ENCODE measurements at regions of chr3 and their contacts with region 1.

Region 1: DNA sequence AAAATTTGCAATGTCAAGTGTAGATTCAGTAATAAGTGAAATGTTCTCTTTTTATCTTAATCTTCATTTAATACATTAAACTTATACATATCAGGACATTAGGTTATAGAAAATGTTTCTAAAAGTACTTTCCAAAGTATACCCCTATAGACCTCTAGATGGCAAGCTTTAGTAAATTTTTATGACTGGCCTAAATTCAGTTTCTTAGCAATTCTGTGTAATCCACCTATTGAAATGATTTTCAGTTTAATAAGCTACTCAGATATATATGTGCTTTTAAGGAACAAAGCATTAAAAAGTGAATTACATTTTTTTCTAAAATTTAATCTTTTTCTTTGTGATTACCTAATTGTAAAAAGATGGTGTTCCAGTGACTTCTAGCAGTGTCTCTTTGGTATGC is 342.2 kb downstream of the GBE1 start:
- DNase-seq: peak; percentile 43
- H3K4me3 ChIP-seq: no peak overlapping the region
- H3K27ac ChIP-seq: no peak overlapping the region
- H3K4me1 ChIP-seq: peaks cover under 1% of the 10 kb centered on the region
- H3K27me3 ChIP-seq: no peaks in the 10 kb centered on the region
- CTCF ChIP-seq: peak; percentile 21 to 32
- POLR2A ChIP-seq: no peak

Region 2: GRCh38 chr3:81352867-81353545 is 66.2 kb before region 1 on chr3:
- CTCF ChIA-PET with region 1: interaction called, 21 read pairs
- POLR2A ChIA-PET with region 1: no interaction called
- dilution Hi-C with region 1: no loop called
- intact Hi-C with region 1: no loop called
- DNase-seq: peak; percentile 85
- H3K4me3 ChIP-seq: no peak overlapping the region
- H3K27ac ChIP-seq: no peak overlapping the region
- H3K4me1 ChIP-seq: no peaks in the 10 kb centered on the region
- H3K27me3 ChIP-seq: no peaks in the 10 kb centered on the region
- CTCF ChIP-seq: peak; percentile 16 to 38
- POLR2A ChIP-seq: no peak

Region 3: GRCh38 chr3:81465510-81466200 is 46.4 kb after region 1 on chr3:
- CTCF ChIA-PET with region 1: interaction called, 16 read pairs
- POLR2A ChIA-PET with region 1: no interaction called
- dilution Hi-C with region 1: no loop called
- intact Hi-C with region 1: no loop called
- DNase-seq: peak; percentile 82
- H3K4me3 ChIP-seq: peak overlapping the region in 1 of 3 experiments; percentile 11
- H3K27ac ChIP-seq: peak overlapping the region; percentile 55
- H3K4me1 ChIP-seq: peaks cover 13% of the 10 kb centered on the region
- H3K27me3 ChIP-seq: no peaks in the 10 kb centered on the region
- CTCF ChIP-seq: no peak
- POLR2A ChIP-seq: no peak

Region 4: DNA sequence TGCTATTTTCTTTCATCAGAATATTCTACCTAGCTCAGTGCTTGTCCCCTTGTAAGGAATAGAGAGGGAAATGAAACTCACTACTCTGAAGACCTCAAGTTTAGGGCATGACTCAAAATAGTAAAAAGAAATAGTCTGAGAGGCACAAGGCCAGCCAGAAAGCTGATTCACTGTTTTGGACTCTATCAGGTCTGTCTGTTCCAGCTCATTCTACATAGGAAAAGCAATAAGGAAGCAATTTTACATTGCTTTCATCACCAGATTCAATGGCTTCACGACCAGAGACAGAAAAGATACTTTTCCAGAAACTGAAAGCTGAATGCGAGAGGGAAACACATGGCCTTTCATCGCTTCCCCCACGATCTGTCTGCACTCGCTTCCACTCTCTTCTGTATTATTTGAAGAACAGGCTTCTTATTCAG is 66.2 kb after region 1 on chr3:
- CTCF ChIA-PET with region 1: interaction called, 64 read pairs
- POLR2A ChIA-PET with region 1: no interaction called
- dilution Hi-C with region 1: no loop called
- intact Hi-C with region 1: loop called (anchors 1 kb)
- DNase-seq: peak; percentile 93
- H3K4me3 ChIP-seq: peak overlapping the region in 1 of 3 experiments; percentile 3
- H3K27ac ChIP-seq: peak overlapping the region; percentile 37
- H3K4me1 ChIP-seq: peaks cover 10% of the 10 kb centered on the region
- H3K27me3 ChIP-seq: no peaks in the 10 kb centered on the region
- CTCF ChIP-seq: no peak
- POLR2A ChIP-seq: no peak

Region 5: GRCh38 chr3:81554388-81554787 is 135.2 kb after region 1 on chr3:
- CTCF ChIA-PET with region 1: interaction called, 10 read pairs
- POLR2A ChIA-PET with region 1: no interaction called
- dilution Hi-C with region 1: no loop called
- intact Hi-C with region 1: no loop called
- DNase-seq: peak; percentile 5
- H3K4me3 ChIP-seq: no peak overlapping the region
- H3K27ac ChIP-seq: no peak overlapping the region
- H3K4me1 ChIP-seq: no peaks in the 10 kb centered on the region
- H3K27me3 ChIP-seq: no peaks in the 10 kb centered on the region
- CTCF ChIP-seq: no peak
- POLR2A ChIP-seq: no peak

Region 6: DNA sequence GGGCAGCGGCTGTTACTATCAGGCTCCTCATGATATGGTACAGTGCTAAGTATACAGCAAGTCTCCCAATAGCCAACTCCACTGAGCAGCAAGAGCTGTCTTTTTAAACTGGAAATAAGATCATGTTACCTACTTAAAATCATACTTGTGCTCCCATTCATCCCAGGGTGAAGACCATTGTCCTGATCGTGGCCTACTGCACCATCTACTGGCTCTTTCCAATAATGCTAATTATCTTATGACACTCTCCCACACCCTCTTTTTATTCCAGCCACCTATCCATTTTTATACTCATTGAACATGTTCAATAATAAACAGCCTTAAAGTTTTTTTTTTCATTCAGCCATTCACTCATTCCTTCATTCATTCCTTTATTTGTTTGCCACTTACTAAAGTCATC is 224.5 kb after region 1 on chr3:
- CTCF ChIA-PET with region 1: interaction called, 64 read pairs
- POLR2A ChIA-PET with region 1: no interaction called
- dilution Hi-C with region 1: no loop called
- intact Hi-C with region 1: loop called (anchors 1 kb)
- DNase-seq: peak; percentile 41
- H3K4me3 ChIP-seq: no peak overlapping the region
- H3K27ac ChIP-seq: no peak overlapping the region
- H3K4me1 ChIP-seq: no peaks in the 10 kb centered on the region
- H3K27me3 ChIP-seq: no peaks in the 10 kb centered on the region
- CTCF ChIP-seq: peak; percentile 28 to 42
- POLR2A ChIP-seq: no peak